ENCODE measurements at regions of chr1 and their contacts with region 1.

Region 1: GRCh38 chr1:22641906-22642636 is 1.4 kb upstream of the C1QC start:
- DNase-seq: peak; percentile 81 to 88
- ATAC-seq: peak; percentile 78 to 90 (median 88)
- H3K4me3 ChIP-seq: no peak overlapping the region
- H3K27ac ChIP-seq: peak overlapping the region in 1 of 10 donors; percentile 56
- H3K4me1 ChIP-seq: peaks cover 0 to 13% (median 3%) of the 10 kb centered on the region in 9 donors
- H3K27me3 ChIP-seq: peaks cover 0 to 28% (median 21%) of the 10 kb centered on the region in 7 donors
- CTCF ChIP-seq: peak; percentile 84 to 97 (median 93)

Region 2: GRCh38 chr1:22105611-22106207 is 536.4 kb before region 1 on chr1:
- intact Hi-C with region 1: loop called in 1 of 10 experiments (anchors 10 kb)
- DNase-seq: no peak
- ATAC-seq: peak in 5 of 8 donors; percentile 24 to 41 (median 33)
- H3K4me3 ChIP-seq: no peak overlapping the region
- H3K27ac ChIP-seq: no peak overlapping the region
- H3K4me1 ChIP-seq: peaks cover 0 to 49% (median 20%) of the 10 kb centered on the region in 9 donors
- H3K27me3 ChIP-seq: no peaks in the 10 kb centered on the region
- CTCF ChIP-seq: peak; percentile 64 to 86 (median 75)

Region 3: GRCh38 chr1:22121411-22121911 is 520.6 kb before region 1 on chr1:
- intact Hi-C with region 1: loop called in 1 of 10 experiments (anchors 10 kb)
- DNase-seq: no peak
- ATAC-seq: peak in 1 of 8 donors; percentile 20
- H3K4me3 ChIP-seq: no peak overlapping the region
- H3K27ac ChIP-seq: no peak overlapping the region
- H3K4me1 ChIP-seq: peaks cover 0 to 29% (median 9%) of the 10 kb centered on the region in 9 donors
- H3K27me3 ChIP-seq: no peaks in the 10 kb centered on the region
- CTCF ChIP-seq: no peak

Region 4: DNA sequence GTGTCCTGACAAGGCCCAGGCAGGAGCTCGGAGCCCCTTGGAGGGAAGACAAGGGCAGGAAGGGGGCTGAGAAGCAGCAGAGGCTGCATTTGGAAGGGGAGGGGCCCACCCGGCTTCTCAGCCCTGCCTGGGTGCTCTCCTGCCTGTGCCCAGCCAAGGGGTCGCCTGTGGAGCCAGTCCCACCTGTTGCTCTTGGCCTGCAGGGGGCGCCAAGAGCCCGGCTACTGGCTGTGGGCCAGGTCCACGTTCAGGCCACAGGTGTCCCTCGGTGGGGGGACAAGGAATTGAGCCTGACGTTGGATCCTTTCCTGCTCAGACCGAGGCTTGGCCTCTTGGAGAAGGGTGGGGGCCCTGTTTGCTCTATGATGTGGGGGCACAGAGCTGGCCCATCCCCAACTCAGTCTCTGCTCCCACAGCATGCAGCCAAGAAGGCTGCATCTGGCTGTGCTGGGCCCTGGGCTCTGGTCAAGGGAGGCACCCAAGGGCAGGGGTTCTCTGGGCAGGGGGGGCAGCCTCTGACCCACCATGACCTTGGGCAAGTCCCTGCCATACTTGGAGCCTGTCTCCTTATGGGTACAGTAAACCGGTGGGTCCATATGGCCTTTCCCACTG is 510.1 kb before region 1 on chr1:
- intact Hi-C with region 1: loop called in 2 of 10 experiments (anchors 10 kb)
- DNase-seq: no peak
- ATAC-seq: peak in 3 of 8 donors; percentile 31 to 36 (median 35)
- H3K4me3 ChIP-seq: no peak overlapping the region
- H3K27ac ChIP-seq: no peak overlapping the region
- H3K4me1 ChIP-seq: peaks cover 0 to 8% (median 4%) of the 10 kb centered on the region in 9 donors
- H3K27me3 ChIP-seq: peaks cover 0 to 37% (median 10%) of the 10 kb centered on the region in 7 donors
- CTCF ChIP-seq: peak; percentile 18 to 79 (median 67)

Region 5: GRCh38 chr1:22527555-22528296 is 114.3 kb before region 1 on chr1:
- intact Hi-C with region 1: loop called in 6 of 10 experiments (anchors 5 to 10 kb)
- DNase-seq: no peak
- ATAC-seq: no peak
- H3K4me3 ChIP-seq: no peak overlapping the region
- H3K27ac ChIP-seq: no peak overlapping the region
- H3K4me1 ChIP-seq: peaks cover 3 to 23% (median 18%) of the 10 kb centered on the region in 9 donors
- H3K27me3 ChIP-seq: no peaks in the 10 kb centered on the region
- CTCF ChIP-seq: peak in 5 of 9 donors; percentile 24 to 35 (median 29)

Region 6: GRCh38 chr1:22540337-22540736 is 101.7 kb before region 1 on chr1:
- intact Hi-C with region 1: loop called in 3 of 10 experiments (anchors 10 kb)
- DNase-seq: no peak
- ATAC-seq: no peak
- H3K4me3 ChIP-seq: no peak overlapping the region
- H3K27ac ChIP-seq: no peak overlapping the region
- H3K4me1 ChIP-seq: no peaks in the 10 kb centered on the region
- H3K27me3 ChIP-seq: peaks cover 0 to 20% (median 11%) of the 10 kb centered on the region in 7 donors
- CTCF ChIP-seq: no peak

Region 7: DNA sequence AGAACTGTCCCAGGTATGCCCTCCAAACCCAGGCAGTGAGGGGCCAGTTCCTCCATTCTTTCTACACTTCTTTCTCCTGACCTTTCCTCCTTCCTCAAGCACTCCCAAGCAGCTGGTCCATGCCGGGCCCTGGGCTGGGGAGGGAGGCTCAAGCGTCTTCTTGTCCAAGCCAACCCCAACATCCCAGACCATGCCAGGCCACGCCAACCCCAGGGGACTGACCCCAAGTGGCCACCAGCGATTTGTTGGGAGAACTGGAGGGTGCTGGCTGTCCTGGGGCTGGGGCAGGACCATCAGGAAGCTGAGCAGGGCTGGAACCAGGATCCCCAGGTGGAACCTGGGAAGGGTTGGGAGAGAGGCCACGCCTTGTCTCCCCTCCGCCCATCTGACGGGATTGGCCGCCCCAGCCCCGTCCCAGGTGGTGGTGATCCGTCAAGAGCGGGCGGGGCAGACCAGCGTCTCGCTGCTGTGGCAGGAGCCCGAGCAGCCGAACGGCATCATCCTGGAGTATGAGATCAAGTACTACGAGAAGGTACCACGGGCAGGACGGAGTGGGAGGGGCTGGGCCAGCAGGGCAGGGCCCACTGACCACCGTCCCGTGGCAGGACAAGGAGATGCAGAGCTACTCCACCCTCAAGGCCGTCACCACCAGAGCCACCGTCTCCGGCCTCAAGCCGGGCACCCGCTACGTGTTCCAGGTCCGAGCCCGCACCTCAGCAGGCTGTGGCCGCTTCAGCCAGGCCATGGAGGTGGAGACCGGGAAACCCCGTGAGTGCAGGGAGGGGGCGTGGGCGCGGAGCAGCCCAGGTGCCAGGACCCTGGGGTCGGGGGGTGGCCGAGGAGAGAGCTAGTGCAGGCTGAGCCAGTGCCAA is 48.9 kb before region 1 on chr1:
- intact Hi-C with region 1: no loop called
- DNase-seq: no peak
- ATAC-seq: no peak
- H3K4me3 ChIP-seq: no peak overlapping the region
- H3K27ac ChIP-seq: no peak overlapping the region
- H3K4me1 ChIP-seq: no peaks in the 10 kb centered on the region
- H3K27me3 ChIP-seq: peaks cover 0 to 63% (median 49%) of the 10 kb centered on the region in 7 donors
- CTCF ChIP-seq: no peak